ENCODE measurements at regions of chr17 and their contacts with region 1.

Region 1: DNA sequence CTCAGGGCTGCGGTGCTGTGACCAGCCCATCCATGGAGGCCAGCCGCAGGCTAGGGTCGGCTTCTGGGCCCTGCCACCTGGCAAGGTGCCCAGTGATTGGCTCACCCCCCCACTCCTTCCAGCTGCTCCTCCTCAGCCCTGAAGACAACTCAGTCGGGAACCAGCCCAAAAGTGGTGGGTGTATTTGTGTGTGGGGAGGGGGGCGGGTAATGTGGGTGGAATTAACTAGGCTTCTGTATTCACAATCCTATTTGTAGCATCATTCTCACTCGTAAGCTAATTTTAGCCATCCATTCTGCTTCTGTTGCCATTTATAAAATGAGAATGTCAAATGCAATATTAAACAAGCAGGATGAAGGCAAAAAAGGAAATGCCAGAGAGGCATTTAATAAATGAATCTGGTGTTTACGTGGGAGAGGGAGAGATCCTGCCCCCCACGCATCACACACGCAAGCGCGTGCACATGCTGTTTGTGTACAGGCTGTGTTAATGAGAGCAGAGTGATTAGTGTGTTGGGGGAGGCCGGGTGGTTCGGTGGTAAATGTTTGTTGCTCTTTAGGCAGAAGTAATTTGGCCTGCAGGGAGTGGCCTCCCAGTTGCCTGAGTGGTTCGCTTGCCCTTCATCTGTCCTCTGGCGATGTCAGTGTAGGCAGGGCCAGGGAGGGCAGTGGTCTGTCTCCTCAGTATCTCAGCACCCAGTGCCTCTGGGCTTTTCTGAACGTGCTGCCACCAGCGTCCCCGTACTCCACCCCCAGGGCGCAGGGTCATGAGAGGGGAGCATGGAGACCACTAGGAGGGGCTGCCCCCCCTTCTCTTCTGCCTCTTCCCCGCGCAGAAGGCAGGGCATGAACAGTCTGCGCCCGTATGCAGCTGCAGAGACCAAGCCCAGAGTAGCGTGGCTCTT is 140.1 kb downstream of the CCDC182 start:
- DNase-seq: peak; percentile 74
- ATAC-seq: peak; percentile 51
- H3K4me3 Mint-ChIP-seq: peak overlapping the region; percentile 40
- H3K27ac Mint-ChIP-seq: peak overlapping the region; percentile 93
- H3K4me1 Mint-ChIP-seq: peaks cover 84% of the 10 kb centered on the region
- H3K27me3 Mint-ChIP-seq: no peaks in the 10 kb centered on the region
- CTCF ChIP-seq: no peak

Region 2: DNA sequence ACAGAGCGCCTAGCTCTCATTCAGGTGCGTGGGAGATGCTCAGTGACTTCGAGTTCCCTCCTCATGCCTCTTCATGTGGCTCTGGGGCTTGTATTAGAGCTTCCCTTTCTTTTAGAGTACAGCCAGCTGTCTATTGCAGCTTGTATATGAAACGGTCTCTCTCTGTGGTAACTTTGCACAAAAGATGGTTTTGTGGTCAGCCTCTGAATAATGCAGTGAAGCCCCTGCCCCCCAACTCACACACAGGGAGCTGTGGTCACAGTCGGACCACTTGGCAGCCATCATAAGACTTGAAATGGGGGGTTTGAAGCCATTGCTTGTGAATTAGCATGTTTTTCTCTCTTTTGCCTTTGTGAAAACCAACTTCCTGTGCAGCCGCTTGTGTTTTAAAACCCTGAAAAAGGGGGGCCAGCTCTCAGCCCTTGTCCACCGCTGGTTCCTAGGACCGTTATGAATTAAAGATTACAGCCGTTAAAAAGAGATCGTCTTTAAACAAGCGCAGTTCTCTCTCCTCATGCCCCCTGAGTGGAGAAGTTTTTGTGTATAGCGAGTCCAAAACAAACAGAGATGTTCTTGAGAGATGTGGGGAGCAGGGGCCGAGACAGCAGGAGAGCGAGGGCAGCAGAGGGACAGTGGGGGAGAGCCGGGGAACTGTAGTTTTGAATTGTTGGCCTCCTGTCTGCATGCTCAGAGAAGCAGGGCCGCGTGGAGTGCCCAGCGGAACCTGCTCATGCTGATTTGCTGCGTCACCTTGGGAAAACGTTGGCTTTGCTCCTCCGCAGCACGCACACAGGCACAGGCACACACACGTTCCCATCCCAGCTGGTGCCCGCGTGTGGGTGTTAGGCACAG is 149.7 kb before region 1 on chr17:
- CTCF ChIA-PET with region 1: interaction called, 5 read pairs
- POLR2A ChIA-PET with region 1: interaction called, 3 read pairs
- intact Hi-C with region 1: loop called (anchors 5 kb)
- DNase-seq: peak; percentile 81
- ATAC-seq: peak; percentile 73
- H3K4me3 Mint-ChIP-seq: peak overlapping the region; percentile 57
- H3K27ac Mint-ChIP-seq: peak overlapping the region; percentile 94
- H3K4me1 Mint-ChIP-seq: peaks cover 68% of the 10 kb centered on the region
- H3K27me3 Mint-ChIP-seq: no peaks in the 10 kb centered on the region
- CTCF ChIP-seq: no peak

Region 3: GRCh38 chr17:57707851-57708291 is 102.8 kb after region 1 on chr17:
- CTCF ChIA-PET with region 1: no interaction called
- POLR2A ChIA-PET with region 1: no interaction called
- intact Hi-C with region 1: no loop called
- DNase-seq: no peak
- ATAC-seq: no peak
- H3K4me3 Mint-ChIP-seq: no peak overlapping the region
- H3K27ac Mint-ChIP-seq: no peak overlapping the region
- H3K4me1 Mint-ChIP-seq: peaks cover 5% of the 10 kb centered on the region
- H3K27me3 Mint-ChIP-seq: no peaks in the 10 kb centered on the region
- CTCF ChIP-seq: no peak

Region 4: GRCh38 chr17:58028578-58028977 is 423.6 kb after region 1 on chr17:
- CTCF ChIA-PET with region 1: no interaction called
- POLR2A ChIA-PET with region 1: no interaction called
- intact Hi-C with region 1: no loop called
- DNase-seq: no peak
- ATAC-seq: no peak
- H3K4me3 Mint-ChIP-seq: no peak overlapping the region
- H3K27ac Mint-ChIP-seq: no peak overlapping the region
- H3K4me1 Mint-ChIP-seq: no peaks in the 10 kb centered on the region
- H3K27me3 Mint-ChIP-seq: peaks cover 19% of the 10 kb centered on the region
- CTCF ChIP-seq: no peak